ENCODE measurements at regions of chr14 and their contacts with region 1.

Region 1: GRCh38 chr14:68655911-68656360 is 136.9 kb downstream of the ZFP36L1 start:
- DNase-seq: no peak
- ATAC-seq: no peak
- H3K4me3 ChIP-seq: no peak overlapping the region
- H3K27ac ChIP-seq: no peak overlapping the region
- H3K4me1 ChIP-seq: peaks cover 37% of the 10 kb centered on the region
- H3K27me3 ChIP-seq: no peaks in the 10 kb centered on the region
- CTCF ChIP-seq: no peak
- POLR2A ChIP-seq: no peak
- RAD21 ChIP-seq: no peak

Region 2: DNA sequence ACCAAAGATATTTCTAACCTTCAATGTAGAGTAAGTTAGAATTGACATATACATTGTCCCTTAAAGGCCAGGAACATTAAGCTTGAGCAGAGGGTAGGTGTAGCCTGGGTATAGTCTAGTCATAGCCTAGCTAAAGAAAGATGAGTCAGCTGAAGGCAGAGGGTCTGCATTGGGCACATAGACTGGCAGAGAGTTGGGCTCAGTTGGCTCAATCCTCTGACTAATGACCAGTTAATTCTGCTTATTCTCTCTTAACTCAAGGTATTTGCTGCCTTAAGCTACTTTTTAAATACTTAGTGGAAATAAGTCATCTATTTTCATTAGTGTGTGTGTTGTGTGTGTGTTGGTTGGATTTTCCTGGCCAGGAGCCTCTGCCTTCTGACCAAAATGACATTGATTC is 369.3 kb before region 1 on chr14:
- CTCF ChIA-PET with region 1: no interaction called
- POLR2A ChIA-PET with region 1: no interaction called
- dilution Hi-C with region 1: no loop called
- in situ Hi-C with region 1: no loop called
- intact Hi-C with region 1: no loop called
- DNase-seq: no peak
- ATAC-seq: no peak
- H3K4me3 ChIP-seq: no peak overlapping the region
- H3K27ac ChIP-seq: no peak overlapping the region
- H3K4me1 ChIP-seq: no peaks in the 10 kb centered on the region
- H3K27me3 ChIP-seq: no peaks in the 10 kb centered on the region
- CTCF ChIP-seq: no peak
- POLR2A ChIP-seq: no peak
- RAD21 ChIP-seq: no peak

Region 3: GRCh38 chr14:68392393-68393141 is 263.4 kb before region 1 on chr14:
- CTCF ChIA-PET with region 1: no interaction called
- POLR2A ChIA-PET with region 1: no interaction called
- dilution Hi-C with region 1: no loop called
- in situ Hi-C with region 1: no loop called
- intact Hi-C with region 1: loop called (anchors 10 kb)
- DNase-seq: no peak
- ATAC-seq: no peak
- H3K4me3 ChIP-seq: no peak overlapping the region
- H3K27ac ChIP-seq: no peak overlapping the region
- H3K4me1 ChIP-seq: peaks cover 31% of the 10 kb centered on the region
- H3K27me3 ChIP-seq: no peaks in the 10 kb centered on the region
- CTCF ChIP-seq: no peak
- POLR2A ChIP-seq: no peak
- RAD21 ChIP-seq: no peak

Region 4: GRCh38 chr14:68548194-68549056 is 107.5 kb before region 1 on chr14:
- CTCF ChIA-PET with region 1: no interaction called
- POLR2A ChIA-PET with region 1: no interaction called
- dilution Hi-C with region 1: no loop called
- in situ Hi-C with region 1: no loop called
- intact Hi-C with region 1: loop called (anchors 10 kb)
- DNase-seq: peak; percentile 98
- ATAC-seq: peak; percentile 79
- H3K4me3 ChIP-seq: no peak overlapping the region
- H3K27ac ChIP-seq: peak overlapping the region; percentile 95
- H3K4me1 ChIP-seq: peaks cover 45% of the 10 kb centered on the region
- H3K27me3 ChIP-seq: no peaks in the 10 kb centered on the region
- CTCF ChIP-seq: no peak
- POLR2A ChIP-seq: 0 out of 2 replicates have a peak, but pooled peaks have one; percentile 30
- RAD21 ChIP-seq: peak; percentile 31

Region 5: DNA sequence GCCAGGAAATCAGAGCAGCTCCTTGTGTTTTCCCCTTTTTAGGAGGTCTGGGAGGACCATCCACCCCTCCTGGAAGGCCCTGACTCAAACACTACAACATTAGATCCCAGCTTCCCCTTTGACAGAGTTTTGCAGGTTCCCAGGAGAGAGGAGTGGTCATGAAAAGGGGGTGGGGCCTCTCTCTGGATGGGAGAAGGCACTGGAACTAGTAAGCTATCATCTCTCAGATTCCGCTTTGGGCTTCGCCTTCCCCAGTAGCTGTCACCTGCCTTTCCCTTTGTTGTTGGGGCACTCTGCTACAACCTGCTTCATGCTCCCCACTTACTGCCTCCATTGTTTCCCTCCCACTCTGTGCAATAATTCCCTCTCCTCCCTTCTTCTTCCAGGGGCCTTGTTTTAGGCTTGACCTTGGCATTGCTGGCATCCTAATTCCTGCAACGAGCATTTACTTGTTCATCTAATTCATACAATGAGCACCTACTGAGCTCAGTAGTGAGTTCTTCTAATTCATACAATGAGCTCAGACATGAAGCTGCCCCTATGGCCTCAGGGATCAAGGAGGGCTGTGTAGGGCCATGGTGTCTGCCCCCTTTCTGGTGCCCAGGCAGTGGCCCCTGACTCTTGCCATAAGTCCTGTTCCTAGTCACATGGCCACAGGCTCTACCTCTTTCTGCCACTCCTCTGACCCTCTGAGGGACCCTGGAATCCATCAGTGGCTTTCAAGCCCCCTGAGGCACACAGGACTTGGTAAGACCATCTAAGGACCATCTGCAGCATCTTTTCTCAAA is 12.0 kb before region 1 on chr14:
- CTCF ChIA-PET with region 1: no interaction called
- POLR2A ChIA-PET with region 1: no interaction called
- dilution Hi-C with region 1: no loop called
- in situ Hi-C with region 1: no loop called
- intact Hi-C with region 1: no loop called
- DNase-seq: no peak
- ATAC-seq: no peak
- H3K4me3 ChIP-seq: no peak overlapping the region
- H3K27ac ChIP-seq: no peak overlapping the region
- H3K4me1 ChIP-seq: peaks cover 3% of the 10 kb centered on the region; the same call in 1 of the 2 replicates
- H3K27me3 ChIP-seq: no peaks in the 10 kb centered on the region
- CTCF ChIP-seq: no peak
- POLR2A ChIP-seq: no peak
- RAD21 ChIP-seq: no peak

Region 6: GRCh38 chr14:68703093-68703492 is 47.2 kb after region 1 on chr14:
- CTCF ChIA-PET with region 1: no interaction called
- POLR2A ChIA-PET with region 1: no interaction called
- dilution Hi-C with region 1: no loop called
- in situ Hi-C with region 1: no loop called
- intact Hi-C with region 1: no loop called
- DNase-seq: peak; percentile 81
- ATAC-seq: peak; percentile 91
- H3K4me3 ChIP-seq: no peak overlapping the region
- H3K27ac ChIP-seq: no peak overlapping the region
- H3K4me1 ChIP-seq: peaks cover 12% of the 10 kb centered on the region
- H3K27me3 ChIP-seq: no peaks in the 10 kb centered on the region
- CTCF ChIP-seq: no peak
- POLR2A ChIP-seq: no peak
- RAD21 ChIP-seq: no peak